Activated B cell treated with CpG ODN at 0.5 μM for 24 hours (primary cell): ENCODE measurements at regions of chr19 and their contacts with region 1.

Region 1: DNA sequence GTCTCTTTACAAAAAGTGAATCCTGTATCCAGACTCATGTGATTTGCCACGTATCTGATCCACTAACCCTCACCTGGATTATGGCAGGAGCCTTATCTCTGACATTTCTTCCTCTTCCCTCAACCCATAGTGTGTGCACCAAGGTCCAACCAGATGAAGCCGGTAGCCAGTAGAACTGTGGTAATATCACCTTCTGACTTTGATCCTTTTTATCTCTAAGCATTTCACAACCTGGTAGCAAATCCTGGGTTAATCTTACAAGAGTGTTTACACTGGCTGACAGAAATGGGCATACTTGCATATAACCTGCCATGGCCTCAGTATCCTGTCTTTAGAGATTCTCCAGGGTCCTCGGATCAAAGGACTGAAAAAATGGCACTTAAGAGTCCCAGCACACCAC is 1.9 kb downstream of the ZNF417 start:
- DNase-seq: no peak
- ATAC-seq: no peak
- H3K4me3 Mint-ChIP-seq: peak overlapping the region; percentile 94
- H3K27ac Mint-ChIP-seq: no peak overlapping the region
- H3K4me1 Mint-ChIP-seq: peaks cover 34% of the 10 kb centered on the region
- H3K27me3 Mint-ChIP-seq: no peaks in the 10 kb centered on the region
- CTCF ChIP-seq: no peak

Region 2: GRCh38 chr19:57746580-57747471 is 167.7 kb before region 1 on chr19 and contains the start of gene ZNF776:
- CTCF ChIA-PET with region 1: no interaction called
- POLR2A ChIA-PET with region 1: no interaction called
- intact Hi-C with region 1: loop called (anchors 1 kb)
- DNase-seq: peak; percentile 54
- ATAC-seq: peak; percentile 95
- H3K4me3 Mint-ChIP-seq: peak within 1 kb of the TSS; percentile 91
- H3K27ac Mint-ChIP-seq: peak within 1 kb of the TSS; percentile 87
- H3K4me1 Mint-ChIP-seq: peaks cover 42% of the 10 kb centered on the region
- H3K27me3 Mint-ChIP-seq: no peaks in the 10 kb centered on the region
- CTCF ChIP-seq: no peak
- total RNA-seq, gene ZNF776: 26.5 and 29.9 TPM in 2 replicates

Region 3: DNA sequence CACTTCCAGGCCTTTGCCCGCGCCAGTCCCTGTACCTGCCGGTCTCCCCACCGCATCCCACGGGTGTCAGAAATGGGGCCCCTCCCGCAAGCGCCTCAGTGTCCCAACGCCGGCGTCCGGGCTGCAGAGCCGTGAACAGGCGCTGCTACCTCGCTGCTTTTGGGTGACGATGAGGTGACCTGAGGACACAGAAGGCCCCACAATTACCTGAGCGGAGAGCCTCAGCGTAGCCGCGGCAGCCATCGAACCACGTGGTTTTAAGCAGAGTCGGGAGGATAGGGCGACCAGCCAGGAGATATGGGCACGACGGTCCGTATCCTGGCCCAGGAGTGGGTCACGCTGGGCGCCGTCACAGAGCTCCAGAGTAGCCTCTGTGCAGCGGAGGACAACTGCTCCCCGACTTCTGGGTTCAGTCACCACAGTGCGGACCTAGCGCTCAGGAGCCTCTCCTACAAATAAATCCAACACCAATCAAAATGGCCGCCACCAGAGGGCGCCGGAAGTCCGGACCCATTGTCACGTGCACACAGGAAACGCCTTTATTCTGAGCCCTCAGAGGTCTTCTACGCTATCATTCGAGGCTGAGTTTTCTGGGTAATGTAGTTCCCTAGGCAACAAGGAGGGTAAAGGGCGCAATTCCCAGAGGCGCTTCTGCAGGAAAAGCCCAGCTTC is 25.8 kb before region 1 on chr19 and contains the start of gene ZNF814:
- CTCF ChIA-PET with region 1: no interaction called
- POLR2A ChIA-PET with region 1: interaction called, 5 read pairs
- intact Hi-C with region 1: loop called (anchors 1 kb)
- DNase-seq: peak; percentile 80
- ATAC-seq: peak; percentile 95
- H3K4me3 Mint-ChIP-seq: peak within 1 kb of the TSS; percentile 95
- H3K27ac Mint-ChIP-seq: peak within 1 kb of the TSS; percentile 84
- H3K4me1 Mint-ChIP-seq: peaks cover 37% of the 10 kb centered on the region
- H3K27me3 Mint-ChIP-seq: no peaks in the 10 kb centered on the region
- CTCF ChIP-seq: no peak
- total RNA-seq, gene ZNF814: 64.7 and 84.0 TPM in 2 replicates

Region 4: GRCh38 chr19:57934820-57935665 is 20.5 kb after region 1 on chr19 and contains the start of gene ZNF418:
- CTCF ChIA-PET with region 1: no interaction called
- POLR2A ChIA-PET with region 1: interaction called, 12 read pairs
- intact Hi-C with region 1: no loop called
- DNase-seq: peak; percentile 40
- ATAC-seq: peak; percentile 99
- H3K4me3 Mint-ChIP-seq: peak within 1 kb of the TSS; percentile 96
- H3K27ac Mint-ChIP-seq: peak within 1 kb of the TSS; percentile 86
- H3K4me1 Mint-ChIP-seq: peaks cover 16% of the 10 kb centered on the region
- H3K27me3 Mint-ChIP-seq: no peaks in the 10 kb centered on the region
- CTCF ChIP-seq: no peak
- total RNA-seq, gene ZNF418: 21.3 and 26.5 TPM in 2 replicates